MCF 10A (cell line): ENCODE measurements at regions of chr4 and their contacts with region 1.

Region 1: DNA sequence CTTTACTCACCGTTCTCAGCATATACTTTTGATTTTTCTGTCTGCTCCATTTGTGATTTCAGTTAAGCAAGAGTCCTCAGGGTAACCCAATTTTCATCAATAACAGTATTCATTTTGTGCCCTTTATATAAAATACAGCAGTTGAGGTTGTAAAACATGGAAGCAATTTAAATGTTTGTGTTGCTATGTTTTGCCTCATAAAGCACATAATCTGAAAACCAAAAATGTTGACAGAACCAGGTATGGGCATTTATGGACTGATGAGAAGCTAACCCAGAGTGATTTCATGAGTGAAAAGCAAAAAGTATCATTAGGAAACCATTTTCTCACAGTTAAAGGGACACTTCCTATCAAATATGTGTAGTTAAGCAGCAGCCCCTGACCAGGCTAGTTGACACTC is at the start of gene ASIC5:
- DNase-seq: no peak
- H3K4me3 Mint-ChIP-seq: no peak within 1 kb of the TSS
- H3K27ac Mint-ChIP-seq: no peak within 1 kb of the TSS
- H3K4me1 Mint-ChIP-seq: no peaks in the 10 kb centered on the region
- H3K27me3 Mint-ChIP-seq: no peaks in the 10 kb centered on the region
- CTCF ChIP-seq: no peak
- total RNA-seq, gene ASIC5: not detected in 2 replicates

Region 2: DNA sequence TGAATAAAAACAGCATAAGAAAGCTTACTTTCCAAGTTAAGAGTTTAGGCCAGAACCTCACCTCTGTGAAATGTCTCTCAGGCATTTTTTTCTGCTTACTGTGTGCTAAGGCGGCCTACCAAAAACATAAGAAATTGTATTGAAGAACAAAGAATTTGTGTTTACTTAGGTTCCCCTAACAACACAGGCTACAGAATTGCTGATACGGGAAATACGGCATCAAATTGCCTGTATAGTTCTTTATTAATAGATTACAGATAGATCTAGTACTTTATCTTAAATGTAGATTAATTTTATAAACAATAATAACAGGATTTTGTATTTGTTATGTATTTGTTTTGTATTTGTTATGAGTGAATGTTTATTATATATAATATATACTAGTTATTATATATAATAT is 13.0 kb before region 1 on chr4:
- CTCF ChIA-PET with region 1: no interaction called
- POLR2A ChIA-PET with region 1: no interaction called
- intact Hi-C with region 1: loop called (anchors 2 kb)
- DNase-seq: no peak
- H3K4me3 Mint-ChIP-seq: no peak overlapping the region
- H3K27ac Mint-ChIP-seq: no peak overlapping the region
- H3K4me1 Mint-ChIP-seq: no peaks in the 10 kb centered on the region
- H3K27me3 Mint-ChIP-seq: no peaks in the 10 kb centered on the region
- CTCF ChIP-seq: no peak

Region 3: GRCh38 chr4:155889031-155889793 is 23.0 kb after region 1 on chr4:
- CTCF ChIA-PET with region 1: no interaction called
- POLR2A ChIA-PET with region 1: no interaction called
- intact Hi-C with region 1: no loop called
- DNase-seq: peak; percentile 90
- H3K4me3 Mint-ChIP-seq: peak overlapping the region; percentile 3
- H3K27ac Mint-ChIP-seq: peak overlapping the region; percentile 56
- H3K4me1 Mint-ChIP-seq: peaks cover 9% of the 10 kb centered on the region
- H3K27me3 Mint-ChIP-seq: no peaks in the 10 kb centered on the region
- CTCF ChIP-seq: no peak

Region 4: GRCh38 chr4:156073976-156074375 is 207.8 kb after region 1 on chr4:
- CTCF ChIA-PET with region 1: no interaction called
- POLR2A ChIA-PET with region 1: no interaction called
- intact Hi-C with region 1: no loop called
- DNase-seq: no peak
- H3K4me3 Mint-ChIP-seq: no peak overlapping the region
- H3K27ac Mint-ChIP-seq: no peak overlapping the region
- H3K4me1 Mint-ChIP-seq: no peaks in the 10 kb centered on the region
- H3K27me3 Mint-ChIP-seq: no peaks in the 10 kb centered on the region
- CTCF ChIP-seq: no peak